ENCODE measurements at regions of chr14 and their contacts with region 1.

Region 1: GRCh38 chr14:71320107-71320733 is 413.0 kb downstream of the PCNX1 start:
- DNase-seq: peak; percentile 90
- ATAC-seq: peak; percentile 78
- H3K4me3 Mint-ChIP-seq: peak within 1 kb of the TSS; percentile 95
- H3K27ac Mint-ChIP-seq: peak within 1 kb of the TSS; percentile 97
- H3K4me1 Mint-ChIP-seq: peaks cover 43% of the 10 kb centered on the region
- H3K27me3 Mint-ChIP-seq: no peaks in the 10 kb centered on the region
- CTCF ChIP-seq: no peak

Region 2: GRCh38 chr14:70809543-70810244 is 510.5 kb before region 1 on chr14:
- CTCF ChIA-PET with region 1: no interaction called
- POLR2A ChIA-PET with region 1: no interaction called
- intact Hi-C with region 1: loop called (anchors 10 kb)
- DNase-seq: peak; percentile 85
- ATAC-seq: peak; percentile 87
- H3K4me3 Mint-ChIP-seq: no peak overlapping the region
- H3K27ac Mint-ChIP-seq: peak overlapping the region; percentile 80
- H3K4me1 Mint-ChIP-seq: peaks cover 24% of the 10 kb centered on the region
- H3K27me3 Mint-ChIP-seq: no peaks in the 10 kb centered on the region
- CTCF ChIP-seq: no peak

Region 3: DNA sequence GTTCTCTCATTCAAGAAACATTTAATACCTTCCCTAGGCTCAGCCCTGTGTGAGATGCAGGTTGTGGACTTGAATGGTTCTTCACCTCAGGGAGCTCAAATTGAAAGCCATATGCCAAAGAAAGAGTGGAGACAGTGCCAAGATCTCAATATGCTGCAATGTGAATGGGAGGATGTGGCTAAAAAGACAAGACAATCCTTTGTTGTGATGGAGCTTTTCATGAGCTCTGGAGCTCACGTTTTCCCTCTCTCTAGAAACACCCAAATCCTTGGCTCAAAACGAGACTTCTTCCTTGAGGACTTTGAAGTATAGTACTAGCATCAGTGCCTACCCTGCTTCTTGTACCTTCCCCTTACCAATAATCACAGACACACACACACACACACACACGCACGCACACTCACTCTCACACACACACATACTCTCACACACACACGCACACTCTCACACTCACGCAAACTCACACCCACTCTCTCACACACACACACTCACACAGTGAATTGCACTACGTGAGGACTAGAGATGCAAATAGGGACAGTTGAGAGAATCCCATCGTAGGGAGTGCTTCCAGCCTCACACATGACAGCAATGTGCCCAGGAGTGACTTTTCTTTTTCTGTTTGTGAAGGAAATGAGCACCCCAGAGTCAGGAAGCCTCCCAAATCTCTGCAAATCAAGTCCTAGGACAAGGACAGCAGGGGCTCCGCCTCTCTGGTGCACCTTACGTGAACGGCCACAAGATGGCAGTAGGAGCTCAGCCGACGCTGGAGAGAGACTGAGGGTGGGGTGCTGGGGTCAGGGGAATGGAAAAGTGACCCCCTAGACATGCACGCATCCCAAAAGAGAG is 181.5 kb before region 1 on chr14:
- CTCF ChIA-PET with region 1: interaction called, 12 read pairs
- POLR2A ChIA-PET with region 1: interaction called, 6 read pairs
- intact Hi-C with region 1: loop called (anchors 1 kb)
- DNase-seq: peak; percentile 42
- ATAC-seq: peak; percentile 84
- H3K4me3 Mint-ChIP-seq: no peak overlapping the region
- H3K27ac Mint-ChIP-seq: no peak overlapping the region
- H3K4me1 Mint-ChIP-seq: peaks cover 28% of the 10 kb centered on the region
- H3K27me3 Mint-ChIP-seq: no peaks in the 10 kb centered on the region
- CTCF ChIP-seq: peak; percentile 64

Region 4: DNA sequence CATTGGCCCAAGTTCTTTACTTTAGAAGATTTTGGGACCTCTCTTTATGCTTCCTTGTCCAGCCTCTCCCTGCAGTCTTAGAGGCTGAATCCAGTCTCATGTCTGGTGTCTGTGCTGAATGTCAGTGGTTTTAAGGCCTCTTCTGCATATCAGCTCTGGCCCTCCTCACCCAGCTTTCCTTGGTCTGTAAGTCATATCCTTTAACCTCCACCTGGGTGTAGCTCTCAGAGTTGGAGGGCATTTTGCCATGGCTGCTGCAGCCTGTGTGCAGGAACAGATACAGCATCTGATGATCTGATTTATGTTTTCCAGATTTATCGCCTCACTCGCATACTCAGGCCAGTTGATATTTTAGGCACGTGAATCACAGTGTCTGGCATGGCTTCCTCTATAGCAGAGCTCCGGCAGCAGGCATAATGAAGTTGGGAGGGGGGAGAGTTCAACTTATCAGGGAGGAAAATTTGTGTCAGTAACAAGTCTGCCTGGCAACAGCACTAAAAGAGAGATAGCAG is 77.9 kb before region 1 on chr14:
- CTCF ChIA-PET with region 1: no interaction called
- POLR2A ChIA-PET with region 1: no interaction called
- intact Hi-C with region 1: no loop called
- DNase-seq: no peak
- ATAC-seq: no peak
- H3K4me3 Mint-ChIP-seq: no peak overlapping the region
- H3K27ac Mint-ChIP-seq: no peak overlapping the region
- H3K4me1 Mint-ChIP-seq: peaks cover 15% of the 10 kb centered on the region
- H3K27me3 Mint-ChIP-seq: no peaks in the 10 kb centered on the region
- CTCF ChIP-seq: no peak

Region 5: GRCh38 chr14:71395151-71395604 is 75.0 kb after region 1 on chr14:
- CTCF ChIA-PET with region 1: interaction called, 208 read pairs
- POLR2A ChIA-PET with region 1: interaction called, 44 read pairs
- intact Hi-C with region 1: loop called (anchors 1 kb)
- DNase-seq: no peak
- ATAC-seq: no peak
- H3K4me3 Mint-ChIP-seq: no peak overlapping the region
- H3K27ac Mint-ChIP-seq: peak overlapping the region; percentile 86
- H3K4me1 Mint-ChIP-seq: peaks cover 86% of the 10 kb centered on the region
- H3K27me3 Mint-ChIP-seq: no peaks in the 10 kb centered on the region
- CTCF ChIP-seq: no peak

Region 6: GRCh38 chr14:71497645-71498086 is 177.4 kb after region 1 on chr14:
- CTCF ChIA-PET with region 1: no interaction called
- POLR2A ChIA-PET with region 1: interaction called, 3 read pairs
- intact Hi-C with region 1: loop called (anchors 2 kb)
- DNase-seq: no peak
- ATAC-seq: peak; percentile 87
- H3K4me3 Mint-ChIP-seq: peak overlapping the region; percentile 8
- H3K27ac Mint-ChIP-seq: peak overlapping the region; percentile 57
- H3K4me1 Mint-ChIP-seq: peaks cover 36% of the 10 kb centered on the region
- H3K27me3 Mint-ChIP-seq: no peaks in the 10 kb centered on the region
- CTCF ChIP-seq: no peak

Region 7: GRCh38 chr14:71682337-71682736 is 362.1 kb after region 1 on chr14:
- CTCF ChIA-PET with region 1: no interaction called
- POLR2A ChIA-PET with region 1: no interaction called
- intact Hi-C with region 1: loop called (anchors 5 kb)
- DNase-seq: no peak
- ATAC-seq: no peak
- H3K4me3 Mint-ChIP-seq: no peak overlapping the region
- H3K27ac Mint-ChIP-seq: no peak overlapping the region
- H3K4me1 Mint-ChIP-seq: no peaks in the 10 kb centered on the region
- H3K27me3 Mint-ChIP-seq: no peaks in the 10 kb centered on the region
- CTCF ChIP-seq: no peak

Region 8: GRCh38 chr14:71863064-71863463 is 542.8 kb after region 1 on chr14:
- CTCF ChIA-PET with region 1: no interaction called
- POLR2A ChIA-PET with region 1: no interaction called
- intact Hi-C with region 1: no loop called
- DNase-seq: no peak
- ATAC-seq: no peak
- H3K4me3 Mint-ChIP-seq: no peak overlapping the region
- H3K27ac Mint-ChIP-seq: no peak overlapping the region
- H3K4me1 Mint-ChIP-seq: no peaks in the 10 kb centered on the region
- H3K27me3 Mint-ChIP-seq: peaks cover 14% of the 10 kb centered on the region
- CTCF ChIP-seq: no peak

Measured in activated B cell treated with CpG ODN at 0.5 μM for 24 hours (primary cell).